Activated CD4-positive, alpha-beta memory T cell treated with anti-CD3 and anti-CD28 coated beads for 36 hours (primary cell): ENCODE measurements at regions of chr3 and their contacts with region 1.

Region 1: DNA sequence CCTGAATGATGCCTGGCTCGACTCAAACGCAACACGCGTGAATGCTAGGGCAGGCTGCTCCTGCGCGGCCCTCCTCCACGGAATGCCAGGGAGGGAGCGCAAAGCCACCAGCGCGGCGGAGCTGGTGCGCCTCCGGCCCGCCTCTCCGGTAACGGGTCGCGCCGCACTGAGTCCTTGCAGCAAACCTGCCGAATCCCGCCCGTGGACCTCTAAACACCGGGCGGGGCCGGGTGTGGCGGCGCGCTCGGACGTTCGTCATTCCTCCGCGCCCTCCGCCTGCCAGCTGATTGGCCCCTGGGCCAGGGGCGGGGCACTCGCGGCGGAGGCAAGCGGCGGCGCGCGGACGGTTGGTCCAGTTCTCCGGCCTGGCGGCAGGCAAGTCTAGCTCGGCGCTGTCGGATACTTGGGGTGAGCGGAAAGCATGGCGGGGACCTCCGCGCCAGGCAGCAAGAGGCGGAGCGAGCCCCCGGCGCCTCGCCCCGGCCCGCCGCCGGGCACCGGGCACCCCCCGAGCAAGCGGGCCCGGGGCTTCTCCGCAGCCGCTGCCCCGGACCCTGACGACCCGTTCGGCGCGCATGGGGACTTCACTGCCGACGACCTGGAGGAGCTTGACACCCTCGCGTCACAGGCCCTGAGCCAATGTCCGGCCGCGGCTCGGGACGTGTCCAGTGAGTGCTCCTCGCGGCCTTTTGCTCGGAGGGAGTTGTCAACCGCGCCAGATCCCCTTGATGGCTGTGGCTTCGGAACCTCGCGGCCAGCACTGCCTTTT is at the start of gene ATRIP:
- DNase-seq: peak; percentile 91
- H3K4me3 Mint-ChIP-seq: peak within 1 kb of the TSS; percentile 90
- H3K27ac Mint-ChIP-seq: peak within 1 kb of the TSS; percentile 64
- H3K4me1 Mint-ChIP-seq: peaks cover 43% of the 10 kb centered on the region
- H3K27me3 Mint-ChIP-seq: no peaks in the 10 kb centered on the region
- total RNA-seq, gene ATRIP: 13.8 to 14.5 TPM

Region 2: GRCh38 chr3:48352547-48352946 is 94.1 kb before region 1 on chr3:
- CTCF ChIA-PET with region 1: no interaction called
- POLR2A ChIA-PET with region 1: no interaction called
- intact Hi-C with region 1: no loop called
- DNase-seq: no peak
- H3K4me3 Mint-ChIP-seq: no peak overlapping the region
- H3K27ac Mint-ChIP-seq: no peak overlapping the region
- H3K4me1 Mint-ChIP-seq: no peaks in the 10 kb centered on the region
- H3K27me3 Mint-ChIP-seq: peaks cover 11% of the 10 kb centered on the region

Region 3: GRCh38 chr3:48465531-48466378 is 19.1 kb after region 1 on chr3:
- CTCF ChIA-PET with region 1: no interaction called
- POLR2A ChIA-PET with region 1: interaction called, 15 read pairs
- intact Hi-C with region 1: no loop called
- DNase-seq: peak; percentile 90
- H3K4me3 Mint-ChIP-seq: peak overlapping the region; percentile 97
- H3K27ac Mint-ChIP-seq: peak overlapping the region; percentile 95
- H3K4me1 Mint-ChIP-seq: peaks cover 46% of the 10 kb centered on the region
- H3K27me3 Mint-ChIP-seq: no peaks in the 10 kb centered on the region